ENCODE measurements at regions of chr2 and their contacts with region 1.

Region 1: DNA sequence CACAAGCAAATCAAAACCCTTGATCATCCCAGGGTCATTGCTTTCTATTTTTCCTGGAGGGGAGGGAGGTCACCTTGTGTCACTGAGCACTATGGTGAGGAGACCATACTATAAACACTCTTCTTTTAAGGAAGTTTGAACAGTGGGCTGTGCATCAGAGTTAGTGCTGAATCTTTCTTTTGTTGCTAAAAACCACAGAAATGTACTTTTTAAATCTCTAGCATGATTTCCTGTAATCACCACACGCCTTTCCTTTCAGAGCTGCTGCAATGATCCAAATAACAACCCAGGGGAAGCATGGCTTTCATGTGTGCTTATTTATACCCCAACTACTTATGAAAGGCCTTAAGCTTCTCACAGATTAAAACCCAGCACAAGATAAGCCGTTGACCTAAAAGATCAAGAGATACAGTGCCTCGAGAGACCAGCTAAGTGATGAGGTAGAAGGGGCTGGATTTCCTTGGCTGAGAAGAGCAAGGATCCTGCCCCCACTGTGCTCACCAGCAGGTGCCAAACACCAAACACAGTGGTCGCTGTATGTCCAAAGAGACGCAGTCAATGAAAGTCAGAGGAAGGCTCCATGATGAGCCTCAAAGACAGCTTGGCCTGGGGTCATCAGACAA is 34.7 kb downstream of the TRABD2A start:
- DNase-seq: no peak
- H3K4me3 Mint-ChIP-seq: peak overlapping the region; percentile 53
- H3K27ac Mint-ChIP-seq: peak overlapping the region; percentile 97
- H3K4me1 Mint-ChIP-seq: peaks cover 87% of the 10 kb centered on the region
- H3K27me3 Mint-ChIP-seq: no peaks in the 10 kb centered on the region

Region 2: GRCh38 chr2:84781942-84782716 is 64.0 kb before region 1 on chr2:
- CTCF ChIA-PET with region 1: no interaction called
- POLR2A ChIA-PET with region 1: no interaction called
- intact Hi-C with region 1: loop called (anchors 2 kb)
- DNase-seq: peak; percentile 75
- H3K4me3 Mint-ChIP-seq: no peak overlapping the region
- H3K27ac Mint-ChIP-seq: peak overlapping the region; percentile 80
- H3K4me1 Mint-ChIP-seq: peaks cover 72% of the 10 kb centered on the region
- H3K27me3 Mint-ChIP-seq: no peaks in the 10 kb centered on the region

Region 3: GRCh38 chr2:84817239-84817655 is 28.9 kb before region 1 on chr2:
- CTCF ChIA-PET with region 1: interaction called, 5 read pairs
- POLR2A ChIA-PET with region 1: interaction called, 3 read pairs
- intact Hi-C with region 1: loop called (anchors 1 kb)
- DNase-seq: peak; percentile 39
- H3K4me3 Mint-ChIP-seq: no peak overlapping the region
- H3K27ac Mint-ChIP-seq: no peak overlapping the region
- H3K4me1 Mint-ChIP-seq: peaks cover 31% of the 10 kb centered on the region
- H3K27me3 Mint-ChIP-seq: no peaks in the 10 kb centered on the region

Region 4: DNA sequence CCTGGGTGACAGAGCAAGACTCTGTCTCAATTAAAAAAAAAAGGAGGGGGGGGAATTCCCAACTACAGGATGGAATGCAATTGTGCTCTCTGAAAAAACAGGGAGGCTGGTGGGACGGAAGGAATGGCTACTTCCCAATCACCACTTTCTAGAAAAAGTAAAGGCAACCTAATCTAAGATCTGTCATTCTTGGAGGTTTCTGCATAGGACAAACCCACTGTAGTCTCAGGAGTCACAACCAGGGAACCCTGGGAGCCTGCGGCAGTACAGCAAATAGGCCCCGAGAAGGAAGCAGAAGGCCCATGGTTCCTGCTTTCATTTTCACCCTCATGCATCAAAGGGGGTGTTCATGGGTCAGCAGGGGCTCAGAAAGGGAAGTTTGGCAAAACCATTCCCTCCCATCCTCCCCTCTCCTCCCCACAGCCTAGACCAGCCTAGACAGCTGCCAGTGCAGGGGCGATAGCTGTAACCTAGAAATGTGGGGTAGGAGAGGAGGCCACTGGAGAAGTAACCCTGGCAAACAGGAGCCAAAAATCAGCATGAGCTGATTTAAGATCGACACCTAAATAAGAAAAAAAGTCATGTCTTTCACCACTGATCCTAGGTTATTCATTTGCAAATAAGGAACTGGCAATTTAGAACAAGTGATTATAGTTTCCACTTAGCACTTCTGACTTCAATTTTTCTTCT is 13.2 kb before region 1 on chr2:
- CTCF ChIA-PET with region 1: interaction called, 3 read pairs
- POLR2A ChIA-PET with region 1: no interaction called
- intact Hi-C with region 1: loop called (anchors 1 kb)
- DNase-seq: peak; percentile 48
- H3K4me3 Mint-ChIP-seq: peak overlapping the region; percentile 63
- H3K27ac Mint-ChIP-seq: peak overlapping the region; percentile 79
- H3K4me1 Mint-ChIP-seq: peaks cover 45% of the 10 kb centered on the region
- H3K27me3 Mint-ChIP-seq: no peaks in the 10 kb centered on the region

Region 5: GRCh38 chr2:84856787-84857186 is 10.6 kb after region 1 on chr2:
- CTCF ChIA-PET with region 1: interaction called, 5 read pairs
- POLR2A ChIA-PET with region 1: interaction called, 4 read pairs
- intact Hi-C with region 1: loop called (anchors 1 kb)
- DNase-seq: peak; percentile 66
- H3K4me3 Mint-ChIP-seq: no peak overlapping the region
- H3K27ac Mint-ChIP-seq: peak overlapping the region; percentile 46
- H3K4me1 Mint-ChIP-seq: peaks cover 91% of the 10 kb centered on the region
- H3K27me3 Mint-ChIP-seq: no peaks in the 10 kb centered on the region